ENCODE measurements at regions of chr20 and their contacts with region 1.

Region 1: GRCh38 chr20:62500237-62500864 is 24.6 kb upstream of the GATA5 start:
- DNase-seq: peak; percentile 63
- H3K4me3 Mint-ChIP-seq: no peak overlapping the region
- H3K27ac Mint-ChIP-seq: no peak overlapping the region
- H3K4me1 Mint-ChIP-seq: peaks cover 19% of the 10 kb centered on the region
- H3K27me3 Mint-ChIP-seq: no peaks in the 10 kb centered on the region
- CTCF ChIP-seq: peak; percentile 83

Region 2: GRCh38 chr20:62595491-62595890 is 95.1 kb after region 1 on chr20:
- CTCF ChIA-PET with region 1: interaction called, 37 read pairs
- POLR2A ChIA-PET with region 1: no interaction called
- intact Hi-C with region 1: loop called (anchors 5 kb)
- DNase-seq: peak; percentile 72
- H3K4me3 Mint-ChIP-seq: no peak overlapping the region
- H3K27ac Mint-ChIP-seq: no peak overlapping the region
- H3K4me1 Mint-ChIP-seq: peaks cover 34% of the 10 kb centered on the region
- H3K27me3 Mint-ChIP-seq: no peaks in the 10 kb centered on the region
- CTCF ChIP-seq: no peak

Region 3: GRCh38 chr20:62603021-62603906 is 102.9 kb after region 1 on chr20:
- CTCF ChIA-PET with region 1: interaction called, 9 read pairs
- POLR2A ChIA-PET with region 1: interaction called, 5 read pairs
- intact Hi-C with region 1: loop called (anchors 5 kb)
- DNase-seq: peak; percentile 93
- H3K4me3 Mint-ChIP-seq: peak overlapping the region; percentile 56
- H3K27ac Mint-ChIP-seq: peak overlapping the region; percentile 13
- H3K4me1 Mint-ChIP-seq: peaks cover 41% of the 10 kb centered on the region
- H3K27me3 Mint-ChIP-seq: no peaks in the 10 kb centered on the region
- CTCF ChIP-seq: no peak

Region 4: DNA sequence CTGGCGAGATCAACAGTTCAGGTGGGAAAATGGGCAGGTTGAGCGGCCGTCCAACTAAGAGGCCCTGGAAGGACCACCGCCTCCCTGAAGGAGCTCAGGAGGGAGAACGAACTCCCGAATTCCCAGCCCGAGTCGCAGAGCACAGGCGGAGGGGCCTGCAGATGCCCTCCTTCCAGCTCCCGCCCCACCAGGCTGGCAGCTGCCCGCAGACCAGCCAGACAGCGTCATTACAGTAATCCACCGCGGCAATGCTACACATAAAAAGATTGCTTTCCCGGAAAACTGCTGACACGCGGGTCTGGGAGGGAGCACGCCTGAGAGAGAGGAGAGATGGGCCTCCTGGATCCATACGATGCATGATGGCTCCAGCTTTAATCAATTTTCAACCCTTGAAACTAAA is 111.5 kb after region 1 on chr20:
- CTCF ChIA-PET with region 1: interaction called, 63 read pairs
- POLR2A ChIA-PET with region 1: interaction called, 3 read pairs
- intact Hi-C with region 1: loop called (anchors 1 kb)
- DNase-seq: no peak
- H3K4me3 Mint-ChIP-seq: no peak overlapping the region
- H3K27ac Mint-ChIP-seq: no peak overlapping the region
- H3K4me1 Mint-ChIP-seq: no peaks in the 10 kb centered on the region
- H3K27me3 Mint-ChIP-seq: peaks cover 11% of the 10 kb centered on the region
- CTCF ChIP-seq: no peak